B cell (primary cell): ENCODE measurements at regions of chr2 and their contacts with region 1.

Region 1: GRCh38 chr2:38377050-38377828 is at the start of gene ATL2:
- DNase-seq: peak; percentile 95
- ATAC-seq: peak; percentile 83
- H3K4me3 ChIP-seq: peak within 1 kb of the TSS; percentile 78 to 91 (median 87)
- H3K4me3 Mint-ChIP-seq: peak within 1 kb of the TSS; percentile 98
- H3K27ac ChIP-seq: peak within 1 kb of the TSS; percentile 91
- H3K27ac Mint-ChIP-seq: peak within 1 kb of the TSS; percentile 96
- H3K4me1 ChIP-seq: peaks cover 17 to 23% of the 10 kb centered on the region in 2 donors
- H3K4me1 Mint-ChIP-seq: peaks cover 50% of the 10 kb centered on the region
- H3K27me3 ChIP-seq: no peaks in the 10 kb centered on the region
- H3K27me3 Mint-ChIP-seq: no peaks in the 10 kb centered on the region
- CTCF ChIP-seq: no peak
- total RNA-seq, gene ATL2: 69.0 and 78.0 TPM in 2 replicates

Region 2: GRCh38 chr2:37324786-37325624 is 1052.2 kb before region 1 on chr2 and contains the start of gene PRKD3:
- CTCF ChIA-PET with region 1: no interaction called
- POLR2A ChIA-PET with region 1: no interaction called
- intact Hi-C with region 1: loop called (anchors 10 kb)
- DNase-seq: peak; percentile 89
- ATAC-seq: peak; percentile 81
- H3K4me3 ChIP-seq: peak within 1 kb of the TSS; percentile 82 to 91 (median 86)
- H3K4me3 Mint-ChIP-seq: peak within 1 kb of the TSS; percentile 100
- H3K27ac ChIP-seq: peak within 1 kb of the TSS; percentile 80 to 88
- H3K27ac Mint-ChIP-seq: peak within 1 kb of the TSS; percentile 97
- H3K4me1 ChIP-seq: peaks cover 29 to 37% of the 10 kb centered on the region in 2 donors
- H3K4me1 Mint-ChIP-seq: peaks cover 38% of the 10 kb centered on the region
- H3K27me3 ChIP-seq: no peaks in the 10 kb centered on the region
- H3K27me3 Mint-ChIP-seq: peaks cover 3% of the 10 kb centered on the region
- CTCF ChIP-seq: no peak
- total RNA-seq, gene PRKD3: 82.2 and 83.4 TPM in 2 replicates

Region 3: DNA sequence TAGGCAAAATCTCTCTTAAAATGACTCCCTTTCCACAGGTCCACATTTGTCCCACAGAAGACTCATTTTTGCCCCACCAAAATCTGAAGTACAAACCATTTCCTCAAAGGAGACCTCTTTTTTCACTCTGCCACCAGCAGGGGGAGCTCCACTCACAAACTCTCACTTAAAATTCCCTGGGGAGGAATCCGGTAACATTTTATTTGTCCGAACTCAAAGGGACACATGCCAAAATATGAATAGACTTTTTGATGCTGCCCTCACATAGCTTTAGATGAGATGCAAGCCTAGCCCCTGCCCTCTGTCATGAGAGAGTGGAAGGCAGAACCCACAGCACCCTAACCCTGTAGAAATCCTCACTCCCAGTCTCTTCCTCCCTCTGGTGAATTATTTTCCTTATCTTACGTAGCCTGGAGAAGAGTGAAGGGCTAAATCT is 395.1 kb before region 1 on chr2:
- CTCF ChIA-PET with region 1: no interaction called
- POLR2A ChIA-PET with region 1: no interaction called
- intact Hi-C with region 1: loop called (anchors 2 kb)
- DNase-seq: peak; percentile 79
- ATAC-seq: peak; percentile 49
- H3K4me3 ChIP-seq: peak overlapping the region in 3 of 5 experiments; percentile 2 to 34 (median 8)
- H3K4me3 Mint-ChIP-seq: peak overlapping the region; percentile 64
- H3K27ac ChIP-seq: no peak overlapping the region
- H3K27ac Mint-ChIP-seq: no peak overlapping the region
- H3K4me1 ChIP-seq: peaks cover 6% of the 10 kb centered on the region in 2 donors
- H3K4me1 Mint-ChIP-seq: peaks cover 6% of the 10 kb centered on the region
- H3K27me3 ChIP-seq: no peaks in the 10 kb centered on the region
- H3K27me3 Mint-ChIP-seq: no peaks in the 10 kb centered on the region
- CTCF ChIP-seq: peak; percentile 94

Region 4: DNA sequence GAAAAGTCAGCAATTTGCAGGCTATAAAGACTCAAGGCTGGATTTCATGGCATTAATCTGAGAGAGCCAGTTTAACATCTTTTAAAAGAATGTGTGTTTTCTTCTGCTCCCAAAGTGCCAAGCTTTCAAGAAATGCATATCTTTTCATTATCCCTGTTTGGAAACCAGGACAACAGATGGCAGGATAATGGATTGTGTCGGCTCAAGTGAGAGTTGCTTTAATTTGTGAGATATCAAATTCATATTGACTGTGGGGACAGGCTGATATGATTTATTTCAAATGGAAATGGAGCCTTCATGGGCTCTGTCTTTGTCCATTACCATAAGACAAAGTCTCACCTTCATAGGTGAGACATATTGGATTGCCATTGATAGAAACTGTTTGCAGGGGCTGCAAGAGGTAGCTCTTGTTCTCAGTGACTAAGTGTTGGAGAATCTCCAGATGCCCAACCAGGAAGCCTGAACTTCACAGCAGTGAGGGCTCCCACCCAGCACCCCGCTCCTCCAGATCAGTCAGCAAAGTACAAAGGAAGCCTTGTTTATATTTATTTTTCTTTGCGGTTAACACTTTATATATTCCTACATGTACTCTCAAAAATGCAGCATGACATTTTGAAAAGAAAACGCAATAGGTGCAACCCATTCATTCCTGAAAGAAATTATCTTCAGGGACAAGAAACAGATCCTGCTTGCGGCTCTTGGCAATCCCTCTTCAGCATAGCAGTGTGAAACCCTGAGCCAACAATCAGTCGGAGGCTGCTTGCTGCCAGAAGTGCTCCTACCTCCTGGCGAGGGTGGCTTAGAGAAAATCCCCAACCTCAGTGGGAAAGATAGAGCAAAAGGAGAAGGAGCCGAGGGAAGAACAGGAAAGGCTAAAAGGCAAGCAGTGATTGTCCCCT is 65.7 kb after region 1 on chr2:
- CTCF ChIA-PET with region 1: no interaction called
- POLR2A ChIA-PET with region 1: no interaction called
- intact Hi-C with region 1: no loop called
- DNase-seq: no peak
- ATAC-seq: no peak
- H3K4me3 ChIP-seq: no peak overlapping the region
- H3K4me3 Mint-ChIP-seq: no peak overlapping the region
- H3K27ac ChIP-seq: no peak overlapping the region
- H3K27ac Mint-ChIP-seq: no peak overlapping the region
- H3K4me1 ChIP-seq: no peaks in the 10 kb centered on the region
- H3K4me1 Mint-ChIP-seq: no peaks in the 10 kb centered on the region
- H3K27me3 ChIP-seq: peaks cover 0 to 9% (median 0%) of the 10 kb centered on the region in 4 experiments
- H3K27me3 Mint-ChIP-seq: peaks cover 31% of the 10 kb centered on the region
- CTCF ChIP-seq: no peak

Region 5: DNA sequence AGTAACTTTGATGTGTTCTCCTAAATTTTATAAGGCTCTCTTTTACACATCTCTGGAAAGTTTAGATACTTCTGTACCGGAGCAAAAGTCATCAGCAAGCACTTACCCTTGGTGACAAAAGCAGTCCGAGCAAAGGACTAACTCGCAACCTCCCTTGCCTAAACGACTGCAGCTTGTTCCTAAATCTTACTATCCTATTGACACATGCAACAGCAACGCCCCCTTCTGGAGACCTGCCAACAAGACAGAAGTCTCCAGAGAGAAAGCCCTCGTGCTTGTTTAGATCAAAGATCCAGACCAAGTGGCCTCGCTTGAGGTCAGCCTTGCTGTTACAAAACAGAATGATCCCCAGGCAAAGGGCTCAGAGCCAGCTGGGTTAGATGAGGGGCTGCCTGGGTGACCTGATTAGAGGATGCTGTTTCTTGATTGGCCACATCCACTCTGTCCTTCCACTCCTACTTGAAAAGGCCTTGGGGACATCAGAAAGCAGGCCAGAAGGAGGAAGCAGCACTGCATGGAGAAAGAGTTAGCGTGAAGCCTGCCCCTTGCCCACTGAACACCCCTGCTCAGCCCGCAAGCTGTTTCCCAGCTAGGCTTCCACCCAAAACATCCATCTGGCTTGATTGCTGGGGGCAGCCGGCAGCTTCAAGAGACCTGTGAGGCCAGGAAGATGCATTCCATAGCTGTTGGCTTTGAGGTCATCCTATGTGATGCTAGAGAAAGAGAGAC is 131.2 kb after region 1 on chr2:
- CTCF ChIA-PET with region 1: interaction called, 5 read pairs
- POLR2A ChIA-PET with region 1: no interaction called
- intact Hi-C with region 1: loop called (anchors 10 kb)
- DNase-seq: peak; percentile 83
- ATAC-seq: peak; percentile 86
- H3K4me3 ChIP-seq: no peak overlapping the region
- H3K4me3 Mint-ChIP-seq: no peak overlapping the region
- H3K27ac ChIP-seq: no peak overlapping the region
- H3K27ac Mint-ChIP-seq: no peak overlapping the region
- H3K4me1 ChIP-seq: no peaks in the 10 kb centered on the region
- H3K4me1 Mint-ChIP-seq: peaks cover 5% of the 10 kb centered on the region
- H3K27me3 ChIP-seq: peaks cover 0 to 5% (median 0%) of the 10 kb centered on the region in 4 experiments
- H3K27me3 Mint-ChIP-seq: no peaks in the 10 kb centered on the region
- CTCF ChIP-seq: peak; percentile 89

Region 6: DNA sequence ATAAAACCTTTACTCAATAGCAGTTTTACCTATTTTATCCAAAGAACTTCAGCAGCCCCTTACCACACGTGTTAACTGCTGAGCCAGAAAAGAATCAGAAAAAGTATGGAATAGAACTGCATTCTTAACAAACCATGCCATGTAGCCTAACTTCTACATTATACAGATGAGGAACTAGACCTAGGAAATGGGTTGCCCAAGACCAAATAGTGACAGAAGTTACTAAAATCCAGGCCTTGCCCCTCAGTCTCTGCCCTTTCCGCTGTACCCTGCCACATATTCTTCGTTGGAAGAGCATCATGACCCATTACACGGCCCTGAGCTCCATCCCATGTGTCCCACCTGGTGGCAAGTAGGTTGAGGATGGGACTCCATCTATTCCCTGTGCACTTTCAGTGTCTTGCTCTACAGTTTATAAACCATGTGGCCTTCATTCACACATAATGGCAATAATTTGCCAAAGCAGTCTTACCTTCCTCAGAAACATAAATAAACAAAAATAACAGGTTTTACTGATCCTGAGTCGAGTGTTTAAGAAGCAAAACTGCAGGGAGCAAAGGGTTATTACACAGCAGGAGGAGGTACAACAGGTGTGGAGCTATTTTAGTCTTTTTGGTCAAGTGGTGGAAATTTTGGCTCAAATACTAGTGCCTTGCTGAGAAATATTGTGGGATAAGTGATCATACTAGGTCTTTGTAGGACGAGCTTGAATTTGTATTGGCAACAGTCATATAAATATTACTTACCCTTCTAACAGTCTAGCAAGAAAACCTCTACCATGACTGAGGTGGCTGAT is 179.0 kb after region 1 on chr2:
- CTCF ChIA-PET with region 1: no interaction called
- POLR2A ChIA-PET with region 1: no interaction called
- intact Hi-C with region 1: no loop called
- DNase-seq: no peak
- ATAC-seq: no peak
- H3K4me3 ChIP-seq: no peak overlapping the region
- H3K4me3 Mint-ChIP-seq: no peak overlapping the region
- H3K27ac ChIP-seq: no peak overlapping the region
- H3K27ac Mint-ChIP-seq: no peak overlapping the region
- H3K4me1 ChIP-seq: no peaks in the 10 kb centered on the region
- H3K4me1 Mint-ChIP-seq: no peaks in the 10 kb centered on the region
- H3K27me3 ChIP-seq: peaks cover 0 to 10% (median 4%) of the 10 kb centered on the region in 4 experiments
- H3K27me3 Mint-ChIP-seq: peaks cover 23% of the 10 kb centered on the region
- CTCF ChIP-seq: no peak

Region 7: GRCh38 chr2:38750891-38751595 is 373.8 kb after region 1 on chr2 and contains the start of gene SRSF7:
- CTCF ChIA-PET with region 1: no interaction called
- POLR2A ChIA-PET with region 1: interaction called, 6 read pairs
- intact Hi-C with region 1: loop called (anchors 1 kb)
- DNase-seq: peak; percentile 99
- ATAC-seq: peak; percentile 77
- H3K4me3 ChIP-seq: peak within 1 kb of the TSS; percentile 78 to 100 (median 98)
- H3K4me3 Mint-ChIP-seq: peak within 1 kb of the TSS; percentile 99
- H3K27ac ChIP-seq: peak within 1 kb of the TSS; percentile 98 to 99
- H3K27ac Mint-ChIP-seq: peak within 1 kb of the TSS; percentile 99
- H3K4me1 ChIP-seq: peaks cover 39 to 46% of the 10 kb centered on the region in 2 donors
- H3K4me1 Mint-ChIP-seq: peaks cover 54% of the 10 kb centered on the region
- H3K27me3 ChIP-seq: no peaks in the 10 kb centered on the region
- H3K27me3 Mint-ChIP-seq: no peaks in the 10 kb centered on the region
- CTCF ChIP-seq: no peak
- total RNA-seq, gene SRSF7: 280 and 283 TPM in 2 replicates